ENCODE measurements at regions of chr12 and their contacts with region 1.

Region 1: GRCh38 chr12:94532490-94533422 is 73.1 kb upstream of the CEP83 start:
- DNase-seq: peak; percentile 55
- H3K4me3 Mint-ChIP-seq: no peak overlapping the region
- H3K27ac Mint-ChIP-seq: no peak overlapping the region
- H3K4me1 Mint-ChIP-seq: peaks cover 8% of the 10 kb centered on the region
- H3K27me3 Mint-ChIP-seq: peaks cover 9% of the 10 kb centered on the region

Region 2: GRCh38 chr12:93502802-93503623 is 1029.7 kb before region 1 on chr12:
- intact Hi-C with region 1: loop called (anchors 5 kb)
- DNase-seq: peak; percentile 26
- H3K4me3 Mint-ChIP-seq: no peak overlapping the region
- H3K27ac Mint-ChIP-seq: no peak overlapping the region
- H3K4me1 Mint-ChIP-seq: peaks cover 15% of the 10 kb centered on the region
- H3K27me3 Mint-ChIP-seq: no peaks in the 10 kb centered on the region

Region 3: DNA sequence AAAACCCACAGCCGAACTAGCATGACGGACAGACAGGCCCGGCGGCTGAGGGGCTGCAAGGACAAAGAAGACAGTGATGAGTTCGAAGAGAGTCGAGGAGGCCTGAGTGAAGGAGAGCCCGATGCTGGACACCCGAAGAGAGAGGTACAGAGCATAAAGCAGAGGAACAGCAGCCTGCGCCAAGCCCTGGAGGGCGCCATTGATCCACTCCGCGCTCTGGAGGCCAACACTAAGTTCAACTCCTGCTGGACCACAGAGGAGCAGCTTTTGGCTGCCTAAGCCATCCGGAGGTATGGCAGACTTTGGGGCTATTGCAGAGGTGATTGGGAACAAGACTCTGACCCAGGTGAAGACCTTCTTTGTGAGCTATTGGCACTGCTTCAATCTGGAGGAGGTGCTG is 392.2 kb before region 1 on chr12:
- intact Hi-C with region 1: loop called (anchors 1 kb)
- DNase-seq: peak; percentile 35
- H3K4me3 Mint-ChIP-seq: no peak overlapping the region
- H3K27ac Mint-ChIP-seq: no peak overlapping the region
- H3K4me1 Mint-ChIP-seq: peaks cover 9% of the 10 kb centered on the region
- H3K27me3 Mint-ChIP-seq: peaks cover 19% of the 10 kb centered on the region

Region 4: DNA sequence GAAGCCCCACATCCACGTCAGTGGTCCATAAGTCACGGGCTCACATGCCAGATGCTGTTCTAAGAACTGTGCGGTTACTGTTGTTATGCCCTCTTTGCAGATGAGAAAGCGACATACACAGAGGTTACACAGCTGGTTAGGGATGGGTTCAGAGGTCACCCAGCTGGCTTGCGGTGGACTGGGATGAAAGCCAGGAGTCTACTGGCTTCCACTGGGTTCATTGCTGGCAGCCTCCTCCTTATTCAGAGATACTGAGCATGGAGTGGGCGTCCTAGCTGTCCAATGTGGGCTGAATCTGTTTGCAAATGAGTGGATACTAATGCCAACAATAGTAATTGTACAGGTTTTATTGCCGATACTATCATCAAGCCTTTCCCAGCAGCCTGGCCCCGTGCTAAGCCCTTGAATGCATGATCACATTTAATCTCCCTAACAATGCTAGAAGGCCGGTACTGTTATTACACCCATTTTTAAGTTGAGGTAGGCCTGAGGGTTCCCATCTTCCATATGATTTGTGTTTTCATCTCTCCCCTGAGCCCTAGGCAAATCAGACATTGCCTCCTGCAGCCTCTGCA is 255.2 kb before region 1 on chr12:
- intact Hi-C with region 1: loop called (anchors 10 kb)
- DNase-seq: no peak
- H3K4me3 Mint-ChIP-seq: no peak overlapping the region
- H3K27ac Mint-ChIP-seq: no peak overlapping the region
- H3K4me1 Mint-ChIP-seq: peaks cover 10% of the 10 kb centered on the region
- H3K27me3 Mint-ChIP-seq: no peaks in the 10 kb centered on the region

Region 5: DNA sequence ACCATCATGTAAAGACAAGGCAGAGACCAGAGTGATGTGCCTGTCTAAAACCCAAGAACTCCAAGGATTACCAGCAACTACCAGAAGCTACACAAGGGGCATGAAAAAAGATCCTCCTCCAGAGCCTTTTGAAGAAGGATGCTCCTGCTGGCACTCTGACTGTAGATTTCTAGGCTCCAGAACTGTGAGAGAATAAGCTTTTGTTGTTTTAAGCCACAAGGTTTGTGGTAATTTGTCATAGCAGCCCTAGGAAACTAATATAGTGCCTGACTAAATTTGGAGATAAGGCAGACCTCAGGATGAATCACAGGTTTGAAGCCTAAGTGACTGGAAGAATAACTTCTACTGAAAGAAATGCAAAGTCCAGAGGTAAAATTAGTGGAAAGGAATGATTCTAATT is 206.0 kb before region 1 on chr12:
- intact Hi-C with region 1: loop called (anchors 2 kb)
- DNase-seq: no peak
- H3K4me3 Mint-ChIP-seq: no peak overlapping the region
- H3K27ac Mint-ChIP-seq: peak overlapping the region; percentile 44
- H3K4me1 Mint-ChIP-seq: peaks cover 35% of the 10 kb centered on the region
- H3K27me3 Mint-ChIP-seq: no peaks in the 10 kb centered on the region

Region 6: GRCh38 chr12:94418517-94418916 is 114.2 kb before region 1 on chr12:
- intact Hi-C with region 1: no loop called
- DNase-seq: no peak
- H3K4me3 Mint-ChIP-seq: no peak overlapping the region
- H3K27ac Mint-ChIP-seq: no peak overlapping the region
- H3K4me1 Mint-ChIP-seq: no peaks in the 10 kb centered on the region
- H3K27me3 Mint-ChIP-seq: no peaks in the 10 kb centered on the region

Region 7: DNA sequence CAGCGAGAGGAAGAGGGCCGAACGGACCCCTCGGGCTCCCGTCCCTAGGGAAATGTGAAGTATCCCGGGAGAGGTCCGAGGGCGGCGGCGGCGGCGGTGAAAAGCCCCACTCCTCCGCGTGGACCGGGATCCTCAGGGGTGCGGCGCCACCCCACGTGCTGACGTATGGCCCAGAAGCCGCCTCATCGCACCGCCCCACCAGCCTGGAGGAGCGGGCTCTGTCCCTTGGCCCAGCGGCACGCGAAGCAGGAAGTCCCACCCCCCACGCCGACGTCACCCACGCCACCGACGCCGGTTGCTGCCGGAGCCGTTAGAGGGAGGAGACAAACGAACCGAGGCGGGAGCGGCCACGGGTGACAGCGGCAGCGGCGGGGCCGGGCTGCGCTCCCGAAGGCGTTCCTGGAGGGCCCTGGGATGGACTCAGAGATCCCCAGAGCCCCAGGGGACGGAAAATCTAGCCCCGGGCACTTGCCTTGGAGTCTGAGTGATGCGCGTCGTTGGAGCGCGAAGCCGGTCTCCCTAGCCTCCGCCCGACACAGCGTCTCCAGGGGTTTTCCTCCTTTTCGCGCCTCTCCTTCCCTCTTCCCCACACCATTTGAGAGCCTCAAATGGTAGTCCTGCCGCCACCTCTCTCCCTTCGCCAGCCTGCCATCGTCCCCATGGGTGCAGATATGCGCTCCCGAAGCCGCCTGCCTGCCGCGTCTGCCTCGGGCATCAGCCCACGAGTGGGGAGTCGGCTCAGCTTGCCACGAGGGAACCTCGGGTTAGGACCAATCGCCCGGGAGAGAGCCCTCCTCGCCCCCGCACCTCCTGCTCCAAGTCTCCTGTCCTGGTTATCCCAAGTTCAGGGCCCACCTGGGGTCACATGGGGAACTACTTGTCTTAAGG is 72.8 kb before region 1 on chr12 and contains the start of gene CEP83:
- intact Hi-C with region 1: loop called (anchors 5 kb)
- DNase-seq: peak; percentile 95
- H3K4me3 Mint-ChIP-seq: peak within 1 kb of the TSS; percentile 88
- H3K27ac Mint-ChIP-seq: peak within 1 kb of the TSS; percentile 92
- H3K4me1 Mint-ChIP-seq: peaks cover 27% of the 10 kb centered on the region
- H3K27me3 Mint-ChIP-seq: peaks cover 5% of the 10 kb centered on the region
- total RNA-seq, gene CEP83: 32.4 and 35.9 TPM in 2 replicates

Measured in activated T-helper 2 cell treated with anti-CD3 and anti-CD28 coated beads, Interferon-gamma antibody, Interleukin-2, Interleukin-4, amounts not matched to agents 10 μg/mL and 5 μg/mL and 100 μg/mL, durations not matched to agents 14 hours and 24 hours and 36 hours (primary cell).